IMR-90 (cell line): ENCODE measurements at regions of chr17 and their contacts with region 1.

Region 1: DNA sequence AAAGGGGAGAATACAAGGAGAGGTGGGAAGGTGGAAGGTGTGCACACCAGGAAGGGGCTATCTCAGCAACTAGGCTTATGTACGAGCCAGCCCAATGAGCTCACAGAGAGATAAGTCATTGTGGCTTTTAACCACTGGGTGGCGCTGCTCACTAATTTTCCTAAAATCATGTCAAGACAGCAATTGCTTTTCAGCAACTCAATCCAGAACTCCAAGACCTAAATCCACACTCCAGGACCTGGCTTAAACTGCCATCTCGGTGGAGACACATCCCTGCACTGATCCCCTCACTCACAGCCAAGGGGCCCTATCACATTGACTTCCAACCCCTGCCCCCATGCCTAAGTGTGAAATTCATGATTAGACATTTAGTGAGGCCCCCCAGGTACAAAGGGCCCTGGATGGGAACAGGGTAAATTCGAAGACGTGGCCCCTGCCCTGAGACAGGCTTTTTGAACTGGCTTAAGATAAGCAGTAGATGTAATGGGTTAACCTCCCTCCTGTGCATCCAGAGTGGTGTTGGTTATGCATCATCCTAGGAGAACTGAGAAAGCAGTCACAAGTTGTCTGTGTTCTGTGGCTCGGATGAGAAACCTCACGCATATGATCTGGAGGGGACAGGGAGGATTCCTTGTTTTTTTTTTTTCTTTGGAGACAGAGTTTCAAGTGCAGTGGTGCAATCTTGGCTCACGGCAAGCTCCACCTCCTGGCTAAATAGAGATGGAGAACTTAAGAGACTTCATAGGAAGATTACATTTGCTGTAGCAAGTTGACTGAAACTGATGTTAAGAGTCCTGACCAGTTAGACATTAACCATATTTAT is 11.5 kb downstream of the CCL16 start:
- DNase-seq: peak; percentile 73
- ATAC-seq: peak; percentile 80
- H3K4me3 ChIP-seq: no peak overlapping the region
- H3K27ac ChIP-seq: no peak overlapping the region
- H3K4me1 ChIP-seq: peaks cover 6% of the 10 kb centered on the region
- H3K27me3 ChIP-seq: peaks cover 5% of the 10 kb centered on the region
- CTCF ChIP-seq: peak; percentile 87
- POLR2A ChIP-seq: no peak
- RAD21 ChIP-seq: peak; percentile 82

Region 2: GRCh38 chr17:35865412-35866340 is 104.1 kb before region 1 on chr17:
- CTCF ChIA-PET with region 1: no interaction called
- POLR2A ChIA-PET with region 1: no interaction called
- dilution Hi-C with region 1: no loop called
- in situ Hi-C with region 1: no loop called
- intact Hi-C with region 1: no loop called
- DNase-seq: peak; percentile 61
- ATAC-seq: peak; percentile 37
- H3K4me3 ChIP-seq: no peak overlapping the region
- H3K27ac ChIP-seq: no peak overlapping the region
- H3K4me1 ChIP-seq: peaks cover 3% of the 10 kb centered on the region; the same call in 1 of the 2 replicates
- H3K27me3 ChIP-seq: no peaks in the 10 kb centered on the region
- CTCF ChIP-seq: no peak
- POLR2A ChIP-seq: no peak
- RAD21 ChIP-seq: no peak

Region 3: DNA sequence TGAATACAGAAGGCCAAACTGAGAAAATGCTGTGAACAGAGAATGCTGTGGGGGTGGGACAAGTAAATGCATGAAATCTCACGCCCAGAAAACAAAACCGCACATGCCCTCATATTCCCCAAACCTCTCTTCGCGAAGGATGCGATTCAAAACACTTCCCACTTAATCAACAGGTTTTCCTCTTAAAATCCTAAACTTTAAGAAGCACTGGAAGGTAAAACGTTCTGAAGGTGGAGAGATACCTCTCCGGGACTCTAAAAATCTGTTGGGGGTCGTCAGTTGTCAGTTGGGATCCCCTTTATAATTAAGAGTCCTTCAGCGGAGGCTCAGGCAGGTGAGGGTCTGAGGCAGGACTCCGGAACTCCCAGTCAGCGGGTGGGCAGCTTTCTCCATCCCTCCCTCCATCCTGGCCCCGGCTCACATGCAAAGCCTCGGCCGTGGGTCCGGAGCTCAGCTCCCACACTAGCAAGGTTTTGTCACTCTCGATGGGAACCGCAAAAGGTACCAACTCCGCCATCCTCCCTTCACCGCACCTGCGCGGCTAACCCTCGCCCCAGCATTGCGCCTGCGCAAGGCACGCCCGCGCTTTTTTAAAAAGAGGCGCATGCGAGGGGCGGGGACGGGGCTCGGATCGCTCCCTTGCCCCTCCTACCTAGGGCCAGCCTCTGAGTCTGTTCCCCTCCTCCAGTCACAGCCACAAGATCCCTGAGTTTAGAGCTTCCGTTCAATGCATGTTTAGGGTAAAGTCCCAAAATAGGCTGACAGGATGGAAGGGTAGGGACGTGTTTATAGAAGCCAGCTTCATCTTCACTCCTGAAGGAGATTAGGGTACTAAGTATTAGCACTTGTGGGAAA is 39.3 kb before region 1 on chr17 and contains the start of gene RDM1:
- CTCF ChIA-PET with region 1: no interaction called
- POLR2A ChIA-PET with region 1: no interaction called
- dilution Hi-C with region 1: no loop called
- in situ Hi-C with region 1: no loop called
- intact Hi-C with region 1: no loop called
- DNase-seq: peak; percentile 34
- ATAC-seq: peak; percentile 93
- H3K4me3 ChIP-seq: peak within 1 kb of the TSS; percentile 48
- H3K27ac ChIP-seq: no peak within 1 kb of the TSS
- H3K4me1 ChIP-seq: no peaks in the 10 kb centered on the region
- H3K27me3 ChIP-seq: peaks cover 3% of the 10 kb centered on the region
- CTCF ChIP-seq: no peak
- POLR2A ChIP-seq: no peak
- RAD21 ChIP-seq: no peak
- total RNA-seq, gene RDM1: 0.18 TPM in 1 of 2 replicates, not detected in the other

Region 4: GRCh38 chr17:36008998-36009665 is 39.4 kb after region 1 on chr17:
- CTCF ChIA-PET with region 1: no interaction called
- POLR2A ChIA-PET with region 1: no interaction called
- dilution Hi-C with region 1: no loop called
- in situ Hi-C with region 1: no loop called
- intact Hi-C with region 1: loop called (anchors 1 kb)
- DNase-seq: peak; percentile 12
- ATAC-seq: peak; percentile 64
- H3K4me3 ChIP-seq: no peak overlapping the region
- H3K27ac ChIP-seq: no peak overlapping the region
- H3K4me1 ChIP-seq: no peaks in the 10 kb centered on the region
- H3K27me3 ChIP-seq: peaks cover 3% of the 10 kb centered on the region
- CTCF ChIP-seq: peak; percentile 59
- POLR2A ChIP-seq: no peak
- RAD21 ChIP-seq: peak; percentile 45

Region 5: GRCh38 chr17:36072431-36073121 is 102.8 kb after region 1 on chr17:
- CTCF ChIA-PET with region 1: interaction called, 6 read pairs
- POLR2A ChIA-PET with region 1: no interaction called
- dilution Hi-C with region 1: no loop called
- in situ Hi-C with region 1: no loop called
- intact Hi-C with region 1: loop called (anchors 1 kb)
- DNase-seq: peak; percentile 10
- ATAC-seq: peak; percentile 79
- H3K4me3 ChIP-seq: no peak overlapping the region
- H3K27ac ChIP-seq: no peak overlapping the region
- H3K4me1 ChIP-seq: no peaks in the 10 kb centered on the region
- H3K27me3 ChIP-seq: peaks cover 1% of the 10 kb centered on the region; the same call in 1 of the 2 replicates
- CTCF ChIP-seq: peak; percentile 48
- POLR2A ChIP-seq: no peak
- RAD21 ChIP-seq: peak; percentile 31

Region 6: GRCh38 chr17:36148559-36149295 is 179.0 kb after region 1 on chr17:
- CTCF ChIA-PET with region 1: interaction called, 4 read pairs
- POLR2A ChIA-PET with region 1: no interaction called
- dilution Hi-C with region 1: no loop called
- in situ Hi-C with region 1: loop called (anchors 5 kb)
- intact Hi-C with region 1: loop called (anchors 1 kb)
- DNase-seq: peak; percentile 55
- ATAC-seq: peak; percentile 100
- H3K4me3 ChIP-seq: no peak overlapping the region
- H3K27ac ChIP-seq: no peak overlapping the region
- H3K4me1 ChIP-seq: no peaks in the 10 kb centered on the region
- H3K27me3 ChIP-seq: peaks cover 1% of the 10 kb centered on the region
- CTCF ChIP-seq: peak; percentile 97
- POLR2A ChIP-seq: no peak
- RAD21 ChIP-seq: peak; percentile 82

Region 7: DNA sequence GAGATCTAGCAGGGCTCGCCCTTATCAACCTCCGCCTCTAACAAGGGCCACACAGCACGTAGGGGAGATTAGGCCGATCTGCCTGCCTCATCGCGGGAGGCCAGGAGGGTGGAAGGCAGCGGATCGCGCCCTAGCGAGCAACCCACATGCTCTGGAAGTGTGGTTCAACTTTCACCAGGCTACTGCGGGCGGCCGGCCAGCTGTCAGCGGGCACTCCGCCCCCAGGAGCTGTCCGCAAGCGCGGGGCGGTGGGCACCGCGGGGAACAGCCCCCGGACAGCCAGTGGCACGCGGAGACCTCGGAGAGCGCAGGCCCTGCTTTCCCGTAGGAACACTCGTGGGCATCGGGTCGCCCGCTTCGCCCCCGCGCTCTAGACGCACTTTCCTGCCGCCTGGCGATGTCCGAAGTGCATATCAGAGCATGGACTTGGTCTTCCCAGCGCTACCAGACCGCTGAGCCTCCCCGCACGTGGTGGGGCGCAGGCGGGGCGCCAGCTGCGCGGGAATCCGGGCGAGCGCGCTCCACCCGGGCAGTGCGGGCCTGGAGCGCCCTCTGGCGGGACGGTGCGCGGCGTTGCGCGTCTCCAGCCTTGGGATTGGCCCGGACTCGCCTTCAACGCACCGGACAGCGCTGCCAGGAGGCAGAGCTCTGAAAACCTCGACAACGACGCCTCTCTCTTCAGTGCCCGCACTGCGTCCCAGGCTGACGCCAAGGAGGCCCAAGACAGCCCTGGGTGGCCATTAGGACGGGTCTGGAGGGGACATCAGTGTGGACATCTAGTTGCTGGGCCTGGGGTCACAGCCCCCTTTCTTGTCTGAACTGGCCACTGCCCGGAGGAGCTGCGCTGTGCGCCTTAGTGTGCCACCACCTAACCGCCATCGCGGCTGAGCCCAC is 513.1 kb after region 1 on chr17:
- CTCF ChIA-PET with region 1: interaction called, 4 read pairs
- POLR2A ChIA-PET with region 1: no interaction called
- dilution Hi-C with region 1: no loop called
- in situ Hi-C with region 1: no loop called
- intact Hi-C with region 1: loop called (anchors 2 kb)
- DNase-seq: peak; percentile 71
- ATAC-seq: peak; percentile 83
- H3K4me3 ChIP-seq: peak overlapping the region; percentile 17; the same call in 1 of the 2 replicates
- H3K27ac ChIP-seq: no peak overlapping the region
- H3K4me1 ChIP-seq: 0 out of 2 replicates have a peak, but pooled peaks cover 1% of the 10 kb centered on the region
- H3K27me3 ChIP-seq: peaks cover 7% of the 10 kb centered on the region; the same call in 1 of the 2 replicates
- CTCF ChIP-seq: peak; percentile 96
- POLR2A ChIP-seq: no peak
- RAD21 ChIP-seq: peak; percentile 80